ENCODE measurements at regions of chr5 and their contacts with region 1.

Region 1: GRCh38 chr5:137220523-137220927 is 278.6 kb downstream of the SPOCK1 start:
- DNase-seq: peak in 1 of 2 donors; percentile 27
- ATAC-seq: peak; percentile 86 to 96
- H3K4me3 ChIP-seq: no peak overlapping the region
- H3K27ac ChIP-seq: no peak overlapping the region
- H3K4me1 ChIP-seq: peaks cover 7 to 11% of the 10 kb centered on the region in 2 donors
- H3K27me3 ChIP-seq: no peaks in the 10 kb centered on the region
- CTCF ChIP-seq: peak in 4 of 5 experiments; percentile 19 to 53 (median 38)
- POLR2A ChIP-seq: no peak

Region 2: GRCh38 chr5:136802383-136802782 is 418.1 kb before region 1 on chr5:
- in situ Hi-C with region 1: loop called in 3 of 4 experiments (anchors 10 to 25 kb)
- intact Hi-C with region 1: no loop called
- DNase-seq: peak in 1 of 2 donors; percentile 14
- ATAC-seq: peak in 1 of 2 donors; percentile 52
- H3K4me3 ChIP-seq: no peak overlapping the region
- H3K27ac ChIP-seq: no peak overlapping the region
- H3K4me1 ChIP-seq: no peaks in the 10 kb centered on the region
- H3K27me3 ChIP-seq: no peaks in the 10 kb centered on the region
- CTCF ChIP-seq: peak in 3 of 5 experiments; percentile 15 to 46 (median 37)
- POLR2A ChIP-seq: no peak

Region 3: GRCh38 chr5:136811551-136811950 is 409.0 kb before region 1 on chr5:
- in situ Hi-C with region 1: loop called in 3 of 4 experiments (anchors 10 to 25 kb)
- intact Hi-C with region 1: loop called (anchors 5 kb)
- DNase-seq: peak; percentile 57 to 76
- ATAC-seq: peak; percentile 95 to 97
- H3K4me3 ChIP-seq: no peak overlapping the region
- H3K27ac ChIP-seq: peak overlapping the region; percentile 84 to 86 (median 85)
- H3K4me1 ChIP-seq: peaks cover 16 to 25% of the 10 kb centered on the region in 2 donors
- H3K27me3 ChIP-seq: no peaks in the 10 kb centered on the region
- CTCF ChIP-seq: no peak
- POLR2A ChIP-seq: peak in 1 of 2 donors; percentile 39

Region 4: GRCh38 chr5:137252512-137252911 is 32.0 kb after region 1 on chr5:
- in situ Hi-C with region 1: no loop called
- intact Hi-C with region 1: no loop called
- DNase-seq: no peak
- ATAC-seq: no peak
- H3K4me3 ChIP-seq: no peak overlapping the region
- H3K27ac ChIP-seq: peak overlapping the region in 1 of 4 donors; percentile 32
- H3K4me1 ChIP-seq: peaks cover 10 to 17% of the 10 kb centered on the region in 2 donors
- H3K27me3 ChIP-seq: no peaks in the 10 kb centered on the region
- CTCF ChIP-seq: no peak
- POLR2A ChIP-seq: no peak

Measured in gastrocnemius medialis (tissue), 4 donors.